HEK293T (cell line): ENCODE measurements at regions of chr3 and their contacts with region 1.

Region 1: DNA sequence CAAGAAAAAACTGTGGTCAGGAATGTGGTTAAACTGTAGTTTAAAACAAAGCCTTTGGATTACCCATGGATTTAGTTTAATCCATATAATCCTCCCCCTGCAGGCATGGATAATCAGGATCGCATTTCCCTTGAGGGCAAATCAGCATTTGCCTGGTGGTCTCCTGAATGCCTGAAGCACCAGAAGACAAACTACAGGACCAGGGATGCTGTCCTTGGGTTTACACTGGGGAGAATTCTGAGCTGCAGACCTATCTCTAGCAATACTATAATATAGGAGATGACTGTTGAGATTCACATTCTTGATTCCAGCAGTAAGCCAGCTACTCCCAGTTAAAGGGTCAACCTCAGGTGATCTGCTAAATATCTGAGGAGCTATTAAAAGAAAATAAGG is 10.6 kb downstream of the PIK3CB start:
- DNase-seq: no peak

Region 2: DNA sequence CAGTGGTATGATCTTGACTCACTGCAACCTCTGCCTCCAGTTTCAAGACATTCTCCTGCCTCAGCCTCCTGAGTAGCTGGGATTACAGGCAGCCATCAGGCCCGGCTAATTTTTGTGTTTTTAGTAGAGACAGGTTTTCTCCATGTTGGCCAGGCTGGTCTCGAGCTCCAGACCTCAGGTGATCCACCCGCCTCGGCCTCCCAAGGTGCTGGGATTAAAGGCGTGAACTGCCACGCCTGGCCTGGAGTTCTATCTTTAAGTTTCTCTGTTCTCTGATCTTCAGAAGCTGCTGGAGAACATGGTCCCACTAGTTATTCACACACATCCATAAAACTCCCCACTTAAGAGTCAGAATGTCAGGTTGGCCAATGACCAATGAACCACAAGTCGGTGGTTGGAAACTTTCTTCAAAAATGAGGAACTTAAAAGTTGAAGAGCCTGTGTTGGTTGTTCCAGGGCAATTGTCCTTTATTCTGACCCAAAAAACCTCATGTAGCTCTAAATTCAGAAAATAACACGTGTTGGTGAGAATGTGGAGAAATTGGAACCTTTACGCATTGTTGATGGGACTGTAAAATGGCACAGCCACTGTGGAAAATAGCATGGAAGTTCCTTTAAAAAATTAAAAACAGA is 66.6 kb after region 1 on chr3:
- CTCF ChIA-PET with region 1: interaction called, 14 read pairs
- POLR2A ChIA-PET with region 1: no interaction called
- DNase-seq: no peak